Activated T-helper 1 cell treated with anti-CD3 and anti-CD28 coated beads, Interleukin-12 subunit alpha, Interleukin-12 subunit beta, Interleukin-2, Interleukin-4 antibody, amounts not matched to agents 30 ng/mL and 10 ng/mL and 1 ng/mL, durations not matched to agents 14 hours and 24 hours and 36 hours (primary cell): ENCODE measurements at regions of chr19 and their contacts with region 1.

Region 1: GRCh38 chr19:6737284-6738046 is at the start of gene GPR108:
- DNase-seq: peak; percentile 100
- H3K4me3 Mint-ChIP-seq: peak within 1 kb of the TSS; percentile 96
- H3K27ac Mint-ChIP-seq: peak within 1 kb of the TSS; percentile 99
- H3K4me1 Mint-ChIP-seq: peaks cover 42% of the 10 kb centered on the region
- H3K27me3 Mint-ChIP-seq: no peaks in the 10 kb centered on the region
- total RNA-seq, gene GPR108: 106 and 108 TPM in 2 replicates

Region 2: DNA sequence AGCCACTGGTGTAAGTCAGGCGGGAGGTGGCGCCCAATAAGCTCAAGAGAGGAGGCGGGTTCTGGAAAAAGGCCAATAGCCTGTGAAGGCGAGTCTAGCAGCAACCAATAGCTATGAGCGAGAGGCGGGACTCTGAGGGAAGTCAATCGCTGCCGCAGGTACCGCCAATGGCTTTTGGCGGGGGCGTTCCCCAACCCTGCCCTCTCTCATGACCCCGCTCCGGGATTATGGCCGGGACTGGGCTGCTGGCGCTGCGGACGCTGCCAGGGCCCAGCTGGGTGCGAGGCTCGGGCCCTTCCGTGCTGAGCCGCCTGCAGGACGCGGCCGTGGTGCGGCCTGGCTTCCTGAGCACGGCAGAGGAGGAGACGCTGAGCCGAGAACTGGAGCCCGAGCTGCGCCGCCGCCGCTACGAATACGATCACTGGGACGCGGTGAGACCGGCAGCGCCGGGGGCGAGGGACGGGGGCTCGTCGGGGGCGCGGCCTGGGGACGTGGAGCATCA is 364.8 kb before region 1 on chr19 and contains the start of gene ALKBH7:
- intact Hi-C with region 1: loop called (anchors 2 kb)
- DNase-seq: peak; percentile 95
- H3K4me3 Mint-ChIP-seq: peak within 1 kb of the TSS; percentile 81
- H3K27ac Mint-ChIP-seq: peak within 1 kb of the TSS; percentile 81
- H3K4me1 Mint-ChIP-seq: peaks cover 11% of the 10 kb centered on the region
- H3K27me3 Mint-ChIP-seq: no peaks in the 10 kb centered on the region
- total RNA-seq, gene ALKBH7: 24.8 and 27.1 TPM in 2 replicates

Region 3: DNA sequence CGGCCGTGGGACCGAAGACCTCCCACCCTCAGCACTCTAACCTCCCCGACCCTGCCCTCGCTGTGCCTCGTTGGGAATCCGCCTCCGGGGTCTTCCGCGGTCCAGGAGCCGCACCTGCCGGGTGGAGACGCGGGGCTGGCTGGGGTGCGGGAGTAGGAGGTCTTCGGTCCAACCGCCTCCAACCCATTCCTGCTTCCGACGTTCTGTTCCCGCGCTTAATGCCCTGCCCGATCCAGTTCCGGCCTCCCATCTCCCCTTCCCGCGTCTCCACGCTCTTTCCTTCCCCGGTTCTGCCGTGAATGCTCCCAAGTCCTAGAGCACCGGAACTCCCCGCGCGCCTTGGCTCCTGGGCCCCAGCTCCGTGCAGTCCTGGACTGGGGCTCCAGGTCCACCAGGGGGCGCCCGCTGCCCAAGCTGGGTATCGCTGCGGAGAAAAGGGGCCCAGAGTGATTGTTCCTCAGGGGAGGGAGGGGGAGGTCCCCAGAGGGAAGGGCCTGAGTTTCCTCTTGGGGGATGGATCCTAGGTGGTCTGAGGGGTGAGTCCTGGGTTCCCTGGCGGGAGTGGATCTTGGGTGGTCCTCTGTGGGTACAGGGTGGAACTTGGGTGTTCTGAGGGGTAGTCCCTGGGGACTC is 220.7 kb before region 1 on chr19:
- intact Hi-C with region 1: loop called (anchors 1 kb)
- DNase-seq: peak; percentile 86
- H3K4me3 Mint-ChIP-seq: peak overlapping the region; percentile 96
- H3K27ac Mint-ChIP-seq: peak overlapping the region; percentile 93
- H3K4me1 Mint-ChIP-seq: peaks cover 34% of the 10 kb centered on the region
- H3K27me3 Mint-ChIP-seq: peaks cover 2% of the 10 kb centered on the region

Region 4: GRCh38 chr19:6632002-6632621 is 105.4 kb before region 1 on chr19:
- intact Hi-C with region 1: loop called (anchors 1 kb)
- DNase-seq: peak; percentile 76
- H3K4me3 Mint-ChIP-seq: no peak overlapping the region
- H3K27ac Mint-ChIP-seq: no peak overlapping the region
- H3K4me1 Mint-ChIP-seq: peaks cover 29% of the 10 kb centered on the region
- H3K27me3 Mint-ChIP-seq: peaks cover 4% of the 10 kb centered on the region

Region 5: GRCh38 chr19:6674868-6675305 is 62.6 kb before region 1 on chr19:
- intact Hi-C with region 1: loop called (anchors 1 kb)
- DNase-seq: peak; percentile 84
- H3K4me3 Mint-ChIP-seq: peak overlapping the region; percentile 70
- H3K27ac Mint-ChIP-seq: peak overlapping the region; percentile 94
- H3K4me1 Mint-ChIP-seq: peaks cover 79% of the 10 kb centered on the region
- H3K27me3 Mint-ChIP-seq: peaks cover 4% of the 10 kb centered on the region

Region 6: DNA sequence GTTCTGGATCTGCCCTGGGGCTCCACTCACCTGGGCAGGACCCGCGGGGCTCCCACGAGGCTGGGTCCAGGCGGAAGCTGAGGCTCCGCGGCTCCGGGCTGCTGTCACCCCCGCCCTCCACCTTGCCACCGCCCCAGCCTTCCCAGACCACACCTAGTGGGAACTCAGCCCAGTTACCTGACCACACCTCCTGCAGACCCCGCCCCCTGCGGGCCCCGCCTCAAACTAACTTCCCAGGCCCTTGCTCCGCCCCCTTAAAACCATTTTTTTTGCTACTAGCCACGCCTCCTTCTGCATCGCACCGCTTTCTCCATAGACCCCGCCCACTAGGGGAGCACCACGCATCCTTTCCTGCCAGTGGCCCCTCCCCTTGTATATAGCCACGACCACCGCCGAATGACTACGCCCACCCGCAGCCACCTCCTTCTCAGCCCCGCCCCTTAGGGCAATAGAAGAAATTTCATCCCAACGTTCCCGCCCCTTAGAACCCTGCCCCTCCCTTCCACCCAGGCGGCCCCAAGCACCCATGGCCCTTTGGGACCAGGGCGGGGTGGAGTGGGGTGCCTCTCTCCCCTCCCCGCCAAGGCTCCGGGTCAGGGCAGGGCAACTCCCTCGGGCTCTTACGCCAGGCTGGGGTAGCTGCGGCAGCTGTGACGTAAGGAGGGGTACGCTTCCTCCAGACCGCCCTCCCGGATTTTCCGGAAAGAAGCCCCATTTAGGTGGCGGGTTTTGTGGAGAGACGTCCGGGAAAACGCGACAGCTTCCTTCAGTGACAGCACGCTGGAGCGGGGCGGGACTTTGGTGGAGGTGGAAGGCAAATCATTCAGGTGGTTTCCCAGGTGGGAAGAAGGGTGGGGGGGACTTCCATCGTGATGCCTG is 30.1 kb after region 1 on chr19 and contains the start of gene SH2D3A:
- intact Hi-C with region 1: loop called (anchors 1 kb)
- DNase-seq: peak; percentile 93
- H3K4me3 Mint-ChIP-seq: peak within 1 kb of the TSS; percentile 88
- H3K27ac Mint-ChIP-seq: peak within 1 kb of the TSS; percentile 89
- H3K4me1 Mint-ChIP-seq: peaks cover 53% of the 10 kb centered on the region
- H3K27me3 Mint-ChIP-seq: no peaks in the 10 kb centered on the region
- total RNA-seq, gene SH2D3A: 15.0 and 15.6 TPM in 2 replicates